B cell (primary cell): ENCODE measurements at regions of chr7 and their contacts with region 1.

Region 1: GRCh38 chr7:45136106-45137060 is 21.2 kb upstream of the RAMP3 start:
- DNase-seq: peak; percentile 80
- ATAC-seq: peak; percentile 97
- H3K4me3 ChIP-seq: no peak overlapping the region
- H3K4me3 Mint-ChIP-seq: no peak overlapping the region
- H3K27ac ChIP-seq: no peak overlapping the region
- H3K27ac Mint-ChIP-seq: no peak overlapping the region
- H3K4me1 ChIP-seq: peaks cover 5 to 18% of the 10 kb centered on the region in 2 donors
- H3K4me1 Mint-ChIP-seq: peaks cover 17% of the 10 kb centered on the region
- H3K27me3 ChIP-seq: peaks cover 0 to 3% (median 0%) of the 10 kb centered on the region in 4 experiments
- H3K27me3 Mint-ChIP-seq: no peaks in the 10 kb centered on the region
- CTCF ChIP-seq: peak; percentile 91

Region 2: DNA sequence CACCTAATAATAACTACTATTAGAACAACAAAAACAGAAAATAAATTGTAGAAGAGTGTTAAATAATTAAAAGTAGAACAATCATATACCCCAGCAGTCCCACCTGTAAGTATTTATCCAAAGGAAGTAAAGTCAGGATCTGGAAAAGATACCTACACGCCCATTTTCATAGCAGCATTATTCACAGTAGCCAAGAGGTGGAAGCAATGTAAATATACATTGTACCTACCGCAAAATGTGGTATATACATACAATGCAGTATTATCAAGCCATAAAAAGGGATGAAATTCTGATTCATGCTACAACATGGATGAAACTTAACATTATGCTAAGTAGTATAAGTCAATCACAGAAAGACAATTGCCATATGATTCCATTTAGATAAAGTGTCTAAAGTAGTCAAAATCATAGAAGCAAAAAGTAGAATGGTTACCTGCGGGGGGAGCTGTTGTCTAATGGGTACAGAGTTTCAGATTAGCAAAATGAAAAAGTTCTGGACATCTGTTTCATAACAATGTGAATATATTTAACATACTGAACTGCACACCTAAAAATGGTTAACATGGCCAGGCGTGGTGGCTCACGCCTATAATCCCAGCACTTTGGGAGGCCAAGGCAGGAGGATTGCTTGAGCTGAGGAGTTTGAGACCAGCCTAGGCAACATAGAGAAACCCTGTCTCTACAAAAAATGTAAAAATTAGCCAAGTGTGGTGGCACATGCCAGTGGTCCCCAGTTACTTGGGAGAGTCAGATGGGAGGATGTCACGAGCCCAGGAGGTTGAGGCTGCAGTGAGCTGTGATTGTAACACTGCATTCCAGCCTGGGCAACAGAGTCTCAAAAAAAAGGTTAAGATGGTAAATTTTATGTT is 548.3 kb before region 1 on chr7:
- CTCF ChIA-PET with region 1: interaction called, 11 read pairs
- POLR2A ChIA-PET with region 1: interaction called, 3 read pairs
- intact Hi-C with region 1: no loop called
- DNase-seq: peak; percentile 78
- ATAC-seq: peak; percentile 83
- H3K4me3 ChIP-seq: no peak overlapping the region
- H3K4me3 Mint-ChIP-seq: no peak overlapping the region
- H3K27ac ChIP-seq: no peak overlapping the region
- H3K27ac Mint-ChIP-seq: no peak overlapping the region
- H3K4me1 ChIP-seq: peaks cover 1 to 3% of the 10 kb centered on the region in 2 donors
- H3K4me1 Mint-ChIP-seq: peaks cover 5% of the 10 kb centered on the region
- H3K27me3 ChIP-seq: peaks cover 0 to 2% (median 0%) of the 10 kb centered on the region in 4 experiments
- H3K27me3 Mint-ChIP-seq: peaks cover 1% of the 10 kb centered on the region
- CTCF ChIP-seq: peak; percentile 86

Region 3: GRCh38 chr7:44921607-44922359 is 214.6 kb before region 1 on chr7:
- CTCF ChIA-PET with region 1: interaction called, 57 read pairs
- POLR2A ChIA-PET with region 1: no interaction called
- intact Hi-C with region 1: loop called (anchors 1 kb)
- DNase-seq: peak; percentile 87
- ATAC-seq: peak; percentile 98
- H3K4me3 ChIP-seq: no peak overlapping the region
- H3K4me3 Mint-ChIP-seq: no peak overlapping the region
- H3K27ac ChIP-seq: no peak overlapping the region
- H3K27ac Mint-ChIP-seq: peak overlapping the region; percentile 53
- H3K4me1 ChIP-seq: no peaks in the 10 kb centered on the region
- H3K4me1 Mint-ChIP-seq: peaks cover 2% of the 10 kb centered on the region
- H3K27me3 ChIP-seq: peaks cover 0 to 4% (median 2%) of the 10 kb centered on the region in 4 experiments
- H3K27me3 Mint-ChIP-seq: peaks cover 5% of the 10 kb centered on the region
- CTCF ChIP-seq: peak; percentile 86

Region 4: GRCh38 chr7:44980393-44981034 is 155.9 kb before region 1 on chr7:
- CTCF ChIA-PET with region 1: interaction called, 125 read pairs
- POLR2A ChIA-PET with region 1: no interaction called
- intact Hi-C with region 1: no loop called
- DNase-seq: peak; percentile 88
- ATAC-seq: peak; percentile 46
- H3K4me3 ChIP-seq: peak overlapping the region in 2 of 5 experiments; percentile 1 to 90
- H3K4me3 Mint-ChIP-seq: peak overlapping the region; percentile 97
- H3K27ac ChIP-seq: peak overlapping the region; percentile 79 to 93
- H3K27ac Mint-ChIP-seq: peak overlapping the region; percentile 98
- H3K4me1 ChIP-seq: peaks cover 53 to 75% of the 10 kb centered on the region in 2 donors
- H3K4me1 Mint-ChIP-seq: peaks cover 86% of the 10 kb centered on the region
- H3K27me3 ChIP-seq: no peaks in the 10 kb centered on the region
- H3K27me3 Mint-ChIP-seq: no peaks in the 10 kb centered on the region
- CTCF ChIP-seq: no peak

Region 5: GRCh38 chr7:45122975-45123860 is 13.2 kb before region 1 on chr7:
- CTCF ChIA-PET with region 1: interaction called, 11 read pairs
- POLR2A ChIA-PET with region 1: interaction called, 6 read pairs
- intact Hi-C with region 1: no loop called
- DNase-seq: no peak
- ATAC-seq: no peak
- H3K4me3 ChIP-seq: no peak overlapping the region
- H3K4me3 Mint-ChIP-seq: no peak overlapping the region
- H3K27ac ChIP-seq: no peak overlapping the region
- H3K27ac Mint-ChIP-seq: no peak overlapping the region
- H3K4me1 ChIP-seq: peaks cover 0 to 20% of the 10 kb centered on the region in 2 donors
- H3K4me1 Mint-ChIP-seq: peaks cover 7% of the 10 kb centered on the region
- H3K27me3 ChIP-seq: no peaks in the 10 kb centered on the region
- H3K27me3 Mint-ChIP-seq: no peaks in the 10 kb centered on the region
- CTCF ChIP-seq: no peak

Region 6: DNA sequence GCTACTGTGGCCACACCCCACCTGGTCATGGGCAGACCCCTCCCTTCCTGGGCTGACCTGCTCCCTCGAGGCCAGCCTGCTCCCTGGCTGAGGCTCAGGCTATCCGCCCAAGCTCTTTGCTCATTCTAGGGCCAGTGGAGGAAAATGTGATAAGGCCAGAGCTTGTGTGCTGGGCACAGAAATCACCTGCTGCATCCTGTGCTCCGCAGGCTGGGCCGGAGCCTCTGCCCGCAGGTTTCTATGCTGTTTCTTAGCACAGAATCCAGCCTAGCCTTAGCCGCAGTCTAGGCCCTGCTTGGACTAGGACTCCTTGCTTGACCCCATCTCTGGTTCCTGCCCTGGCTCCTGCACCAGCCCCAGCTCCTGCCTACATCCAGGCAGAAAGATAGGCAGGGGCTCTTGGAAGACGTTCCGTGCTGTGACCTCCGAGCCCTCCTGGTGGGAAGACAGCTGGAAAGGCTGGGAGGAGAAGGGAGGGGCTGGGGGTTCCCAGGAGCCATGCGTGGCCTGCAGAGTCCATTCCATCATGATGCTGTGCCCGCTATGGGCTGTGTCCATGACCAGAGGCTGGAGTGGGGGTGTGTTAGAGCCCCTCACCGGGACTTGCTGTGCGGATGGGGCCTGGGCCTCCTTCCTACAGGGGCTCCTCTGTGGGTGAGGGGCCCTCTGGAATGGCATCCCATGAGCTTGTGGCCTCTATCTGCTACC is 47.3 kb after region 1 on chr7:
- CTCF ChIA-PET with region 1: no interaction called
- POLR2A ChIA-PET with region 1: no interaction called
- intact Hi-C with region 1: no loop called
- DNase-seq: no peak
- ATAC-seq: no peak
- H3K4me3 ChIP-seq: no peak overlapping the region
- H3K4me3 Mint-ChIP-seq: no peak overlapping the region
- H3K27ac ChIP-seq: no peak overlapping the region
- H3K27ac Mint-ChIP-seq: no peak overlapping the region
- H3K4me1 ChIP-seq: no peaks in the 10 kb centered on the region
- H3K4me1 Mint-ChIP-seq: no peaks in the 10 kb centered on the region
- H3K27me3 ChIP-seq: peaks cover 0 to 2% (median 1%) of the 10 kb centered on the region in 4 experiments
- H3K27me3 Mint-ChIP-seq: peaks cover 21% of the 10 kb centered on the region
- CTCF ChIP-seq: no peak